Posterior vena cava (tissue), 2 donors: ENCODE measurements at regions of chr18 and their contacts with region 1.

Region 1: GRCh38 chr18:21111341-21112139 is at the start of gene ROCK1:
- DNase-seq: peak; percentile 100
- total RNA-seq, gene ROCK1: 114 to 143 TPM

Region 2: DNA sequence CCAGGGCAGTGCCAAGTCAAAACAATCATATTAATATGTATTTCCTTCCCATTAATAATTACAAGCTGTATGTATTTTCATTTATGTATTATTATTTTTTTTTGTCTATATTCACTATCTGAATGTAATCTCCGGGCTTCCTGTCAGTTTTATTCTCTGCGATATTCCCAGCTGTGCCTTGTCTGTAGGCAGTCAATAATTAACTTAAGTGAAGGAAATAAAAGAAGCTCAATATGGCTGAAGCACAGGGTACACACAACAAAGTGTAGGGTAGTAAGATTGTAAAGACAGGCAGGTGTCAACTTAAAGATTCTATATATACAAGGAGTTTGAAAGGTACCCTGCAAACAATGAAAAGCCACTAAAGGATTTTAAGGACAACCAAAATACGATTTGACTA is 122.8 kb before region 1 on chr18:
- intact Hi-C with region 1: loop called in 1 of 2 experiments (anchors 10 kb)
- DNase-seq: no peak

Region 3: GRCh38 chr18:21053127-21053526 is 58.4 kb before region 1 on chr18:
- intact Hi-C with region 1: loop called in 1 of 2 experiments (anchors 10 kb)
- DNase-seq: no peak

Region 4: DNA sequence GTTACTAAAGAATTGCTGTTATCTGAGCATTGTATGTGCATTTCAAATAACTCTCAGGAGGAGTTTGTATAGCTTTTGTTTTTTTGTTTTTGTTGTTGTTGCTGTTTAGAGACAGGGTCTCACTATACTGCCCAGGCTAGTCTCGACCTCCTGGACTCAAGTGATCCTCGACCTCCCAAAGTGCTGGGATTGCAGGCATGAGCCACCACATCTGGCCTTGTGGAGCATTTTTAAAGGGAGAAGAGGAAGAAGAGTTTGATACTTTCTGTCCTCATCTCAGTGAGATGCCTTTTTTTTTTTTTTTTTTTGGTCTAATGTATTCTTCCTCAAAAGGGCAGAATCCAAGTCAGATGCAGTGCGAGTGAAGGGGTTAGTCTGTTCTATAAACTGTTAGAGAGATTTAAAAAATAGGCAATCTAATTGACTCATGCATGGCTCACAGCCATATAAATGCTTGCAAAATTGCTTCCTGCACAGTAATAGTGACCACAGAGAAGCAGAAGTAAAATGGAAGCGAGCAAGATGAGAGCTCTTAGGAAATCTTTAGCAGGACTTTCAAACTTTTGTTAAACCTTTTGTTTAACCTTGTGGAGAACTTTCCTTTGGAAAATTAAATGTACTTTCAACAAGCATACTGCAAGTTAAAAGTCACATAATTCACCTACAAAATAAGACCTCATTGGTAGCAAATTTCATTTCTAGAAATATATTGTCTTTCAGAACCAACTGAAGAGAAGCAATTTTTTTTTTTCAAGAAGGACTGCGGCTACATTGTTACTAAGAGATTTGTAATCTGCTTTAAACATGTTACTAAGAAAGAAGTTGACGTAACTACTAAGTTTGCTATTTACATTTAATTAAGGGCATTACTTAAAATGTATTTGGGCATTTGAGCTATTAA is 52.4 kb after region 1 on chr18:
- intact Hi-C with region 1: loop called in 1 of 2 experiments (anchors 10 kb)
- DNase-seq: no peak